Activated B cell treated with CpG ODN at 0.5 μM for 24 hours (primary cell): ENCODE measurements at regions of chr1 and their contacts with region 1.

Region 1: DNA sequence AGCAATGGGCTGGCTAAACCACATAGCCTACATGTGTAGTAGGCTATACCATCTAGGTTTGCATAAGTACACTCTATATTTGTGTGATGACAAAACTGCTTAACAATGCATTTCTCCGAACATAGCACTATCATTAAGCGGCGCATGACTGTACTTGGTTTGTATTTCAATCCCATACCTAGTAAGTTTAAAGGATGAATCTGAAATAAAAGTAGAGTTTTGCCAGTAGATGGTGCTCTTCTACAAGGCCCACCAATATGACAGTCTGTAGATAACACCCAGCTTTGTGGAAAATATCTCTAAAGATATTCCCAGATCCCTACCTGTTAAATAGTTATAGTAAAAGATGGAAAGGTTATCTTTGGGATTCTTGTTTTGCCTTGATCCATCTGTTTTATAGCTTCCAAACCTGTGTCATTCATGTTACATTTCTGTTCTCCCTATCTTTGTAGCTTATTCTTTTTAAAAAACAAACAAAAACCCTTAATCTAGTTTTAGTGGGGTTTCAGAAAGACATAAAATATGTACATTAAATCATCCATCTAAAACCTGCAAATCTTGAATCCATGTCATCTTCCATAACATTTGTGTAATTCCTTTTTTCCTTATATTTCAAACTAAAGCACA is 33.9 kb upstream of the ASPM start:
- DNase-seq: no peak
- ATAC-seq: peak; percentile 50
- H3K4me3 Mint-ChIP-seq: no peak overlapping the region
- H3K27ac Mint-ChIP-seq: no peak overlapping the region
- H3K4me1 Mint-ChIP-seq: peaks cover 21% of the 10 kb centered on the region
- H3K27me3 Mint-ChIP-seq: no peaks in the 10 kb centered on the region
- CTCF ChIP-seq: peak; percentile 34

Region 2: GRCh38 chr1:196007785-196008184 is 1172.6 kb before region 1 on chr1:
- CTCF ChIA-PET with region 1: no interaction called
- POLR2A ChIA-PET with region 1: no interaction called
- intact Hi-C with region 1: no loop called
- DNase-seq: no peak
- ATAC-seq: no peak
- H3K4me3 Mint-ChIP-seq: no peak overlapping the region
- H3K27ac Mint-ChIP-seq: no peak overlapping the region
- H3K4me1 Mint-ChIP-seq: no peaks in the 10 kb centered on the region
- H3K27me3 Mint-ChIP-seq: no peaks in the 10 kb centered on the region
- CTCF ChIP-seq: no peak

Region 3: GRCh38 chr1:197327776-197328364 is 147.5 kb after region 1 on chr1:
- CTCF ChIA-PET with region 1: interaction called, 5 read pairs
- POLR2A ChIA-PET with region 1: no interaction called
- intact Hi-C with region 1: loop called (anchors 1 kb)
- DNase-seq: no peak
- ATAC-seq: no peak
- H3K4me3 Mint-ChIP-seq: no peak overlapping the region
- H3K27ac Mint-ChIP-seq: no peak overlapping the region
- H3K4me1 Mint-ChIP-seq: no peaks in the 10 kb centered on the region
- H3K27me3 Mint-ChIP-seq: no peaks in the 10 kb centered on the region
- CTCF ChIP-seq: no peak

Region 4: GRCh38 chr1:197356723-197357533 is 176.6 kb after region 1 on chr1:
- CTCF ChIA-PET with region 1: interaction called, 89 read pairs
- POLR2A ChIA-PET with region 1: interaction called, 3 read pairs
- intact Hi-C with region 1: loop called (anchors 1 kb)
- DNase-seq: no peak
- ATAC-seq: peak; percentile 25
- H3K4me3 Mint-ChIP-seq: no peak overlapping the region
- H3K27ac Mint-ChIP-seq: no peak overlapping the region
- H3K4me1 Mint-ChIP-seq: no peaks in the 10 kb centered on the region
- H3K27me3 Mint-ChIP-seq: no peaks in the 10 kb centered on the region
- CTCF ChIP-seq: no peak

Region 5: DNA sequence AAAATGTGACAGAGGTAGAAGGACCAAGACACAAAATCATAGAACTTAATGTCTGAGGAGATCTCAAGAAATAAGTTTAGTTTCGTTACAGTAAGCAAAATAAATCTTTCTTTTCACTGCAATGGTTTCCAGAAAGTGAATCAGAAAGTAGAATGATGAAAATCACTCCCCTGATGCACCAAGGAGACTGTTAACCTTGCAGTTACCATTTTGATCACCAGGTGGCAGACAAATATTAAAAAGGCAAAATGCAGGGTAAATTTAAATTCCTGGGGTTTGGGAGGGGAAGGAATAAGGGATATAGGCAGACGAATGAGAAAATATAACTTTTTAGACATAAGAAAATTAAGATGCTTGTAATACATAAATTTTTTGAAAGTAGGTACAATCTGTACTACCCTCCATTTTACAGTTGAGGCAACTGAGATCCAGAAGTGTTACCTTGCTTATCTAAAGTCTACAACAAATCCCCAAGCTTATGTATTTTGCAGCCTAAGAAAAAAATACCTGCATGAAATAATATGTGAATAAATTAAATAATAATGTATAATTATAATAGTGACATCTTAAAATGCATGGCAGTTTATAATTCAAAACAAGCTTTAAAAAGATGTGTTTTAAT is 340.9 kb after region 1 on chr1:
- CTCF ChIA-PET with region 1: interaction called, 4 read pairs
- POLR2A ChIA-PET with region 1: no interaction called
- intact Hi-C with region 1: loop called (anchors 5 kb)
- DNase-seq: no peak
- ATAC-seq: peak; percentile 42
- H3K4me3 Mint-ChIP-seq: no peak overlapping the region
- H3K27ac Mint-ChIP-seq: no peak overlapping the region
- H3K4me1 Mint-ChIP-seq: no peaks in the 10 kb centered on the region
- H3K27me3 Mint-ChIP-seq: no peaks in the 10 kb centered on the region
- CTCF ChIP-seq: peak; percentile 47

Region 6: GRCh38 chr1:197915862-197916499 is 735.6 kb after region 1 on chr1:
- CTCF ChIA-PET with region 1: no interaction called
- POLR2A ChIA-PET with region 1: no interaction called
- intact Hi-C with region 1: loop called (anchors 5 kb)
- DNase-seq: no peak
- ATAC-seq: peak; percentile 12
- H3K4me3 Mint-ChIP-seq: peak overlapping the region; percentile 65
- H3K27ac Mint-ChIP-seq: no peak overlapping the region
- H3K4me1 Mint-ChIP-seq: peaks cover 83% of the 10 kb centered on the region
- H3K27me3 Mint-ChIP-seq: peaks cover 84% of the 10 kb centered on the region
- CTCF ChIP-seq: no peak